AG04449 (cell line): ENCODE measurements at regions of chr9 and their contacts with region 1.

Region 1: DNA sequence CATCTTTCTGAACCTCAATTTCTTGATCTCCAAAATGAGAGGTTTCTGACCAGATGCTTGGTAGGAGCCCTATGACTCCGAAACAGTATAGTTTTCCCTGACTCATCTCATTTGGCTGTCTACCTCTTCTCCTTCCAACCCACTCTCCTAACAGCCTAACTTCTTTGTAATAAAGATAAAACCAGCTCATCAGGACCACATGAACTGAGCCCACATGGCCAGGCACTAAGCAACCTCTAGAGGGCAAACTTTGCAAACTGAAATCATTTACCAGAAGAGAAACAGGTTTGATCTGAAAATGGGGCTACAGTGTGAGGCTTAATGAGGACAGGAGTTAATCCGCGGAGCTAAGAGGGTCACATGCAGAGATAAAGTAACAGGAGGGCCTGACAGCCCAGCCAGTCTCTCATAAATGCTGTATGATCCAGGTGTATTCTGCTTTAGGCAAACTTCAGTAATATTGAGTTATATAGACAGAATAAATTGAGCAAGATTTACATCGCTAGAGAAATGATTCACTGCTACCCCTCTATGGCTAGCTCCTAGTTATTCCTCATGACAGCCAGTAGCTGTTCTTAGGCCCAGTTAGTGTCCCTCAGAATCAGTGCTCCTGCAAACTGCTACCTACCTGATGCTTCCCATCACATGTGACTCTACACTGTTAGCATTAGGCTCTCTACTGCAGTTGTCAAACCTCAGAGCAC is 64.6 kb downstream of the ABCA1 start:
- DNase-seq: no peak
- H3K4me3 ChIP-seq: no peak overlapping the region
- CTCF ChIP-seq: peak; percentile 75

Region 2: DNA sequence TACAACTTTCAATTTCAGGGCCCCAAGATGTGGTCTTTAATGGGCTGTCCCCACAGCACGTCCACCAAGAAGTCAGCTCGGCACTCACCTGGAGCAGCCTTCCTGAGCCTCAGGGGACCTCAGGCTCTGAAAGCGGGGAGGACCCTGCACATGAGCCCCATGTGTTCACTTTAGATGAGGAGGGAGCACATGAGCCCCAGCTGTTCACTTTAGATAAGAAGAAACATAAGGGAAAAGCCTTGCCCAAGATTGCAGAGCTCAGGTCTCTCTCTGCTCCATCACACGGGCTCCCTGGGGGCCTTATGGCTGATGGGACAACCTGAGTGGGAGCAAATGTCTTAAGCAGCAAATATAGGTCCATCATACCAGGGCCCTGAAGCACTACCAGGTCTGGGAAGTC is 43.0 kb before region 1 on chr9:
- CTCF ChIA-PET with region 1: no interaction called
- POLR2A ChIA-PET with region 1: no interaction called
- DNase-seq: no peak
- H3K4me3 ChIP-seq: no peak overlapping the region
- CTCF ChIP-seq: no peak

Region 3: DNA sequence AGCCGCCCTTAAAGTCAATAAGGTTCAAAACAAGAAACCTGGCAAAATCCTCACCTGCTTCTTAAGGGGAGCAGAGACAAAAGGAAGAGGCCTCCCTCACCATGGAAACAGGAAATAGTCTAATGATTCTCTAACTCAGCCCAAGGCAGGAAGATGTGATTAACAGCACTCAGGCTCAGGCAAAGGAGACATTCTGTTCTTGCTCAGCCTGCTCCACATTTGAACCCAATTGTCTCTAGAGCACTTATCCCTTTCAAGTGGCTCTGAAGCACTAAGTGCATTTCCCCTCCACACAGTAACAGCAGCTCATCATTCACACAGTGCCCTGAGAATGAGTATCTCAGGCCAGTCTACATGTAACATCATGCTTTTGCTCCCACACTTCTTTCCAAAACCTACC is 27.1 kb before region 1 on chr9:
- CTCF ChIA-PET with region 1: interaction called, 15 read pairs
- POLR2A ChIA-PET with region 1: no interaction called
- DNase-seq: no peak
- H3K4me3 ChIP-seq: no peak overlapping the region
- CTCF ChIP-seq: no peak

Region 4: DNA sequence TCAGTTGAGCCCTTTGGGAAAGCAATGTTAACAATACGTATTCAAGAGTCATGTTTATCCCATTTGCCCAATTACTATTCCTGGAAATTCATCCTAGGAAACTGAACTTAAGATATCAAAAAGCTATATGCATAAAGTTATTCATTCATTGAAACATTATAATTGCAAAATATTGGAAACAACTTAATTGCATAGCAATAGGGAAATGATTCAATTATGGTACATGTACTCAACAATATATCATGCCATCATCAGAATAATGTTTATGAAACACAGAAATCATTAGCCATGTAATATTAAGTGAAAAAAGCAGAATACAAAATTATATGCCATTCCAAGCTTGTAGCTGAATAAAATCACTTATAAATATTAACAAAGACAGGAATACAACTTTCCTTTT is 29.4 kb after region 1 on chr9:
- CTCF ChIA-PET with region 1: interaction called, 21 read pairs
- POLR2A ChIA-PET with region 1: no interaction called
- DNase-seq: no peak
- H3K4me3 ChIP-seq: no peak overlapping the region
- CTCF ChIP-seq: no peak

Region 5: GRCh38 chr9:104927912-104928740 is 64.8 kb after region 1 on chr9 and contains the start of gene ABCA1:
- CTCF ChIA-PET with region 1: interaction called, 27 read pairs
- POLR2A ChIA-PET with region 1: interaction called, 5 read pairs
- DNase-seq: no peak
- H3K4me3 ChIP-seq: peak within 1 kb of the TSS; percentile 73
- CTCF ChIP-seq: no peak

Region 6: DNA sequence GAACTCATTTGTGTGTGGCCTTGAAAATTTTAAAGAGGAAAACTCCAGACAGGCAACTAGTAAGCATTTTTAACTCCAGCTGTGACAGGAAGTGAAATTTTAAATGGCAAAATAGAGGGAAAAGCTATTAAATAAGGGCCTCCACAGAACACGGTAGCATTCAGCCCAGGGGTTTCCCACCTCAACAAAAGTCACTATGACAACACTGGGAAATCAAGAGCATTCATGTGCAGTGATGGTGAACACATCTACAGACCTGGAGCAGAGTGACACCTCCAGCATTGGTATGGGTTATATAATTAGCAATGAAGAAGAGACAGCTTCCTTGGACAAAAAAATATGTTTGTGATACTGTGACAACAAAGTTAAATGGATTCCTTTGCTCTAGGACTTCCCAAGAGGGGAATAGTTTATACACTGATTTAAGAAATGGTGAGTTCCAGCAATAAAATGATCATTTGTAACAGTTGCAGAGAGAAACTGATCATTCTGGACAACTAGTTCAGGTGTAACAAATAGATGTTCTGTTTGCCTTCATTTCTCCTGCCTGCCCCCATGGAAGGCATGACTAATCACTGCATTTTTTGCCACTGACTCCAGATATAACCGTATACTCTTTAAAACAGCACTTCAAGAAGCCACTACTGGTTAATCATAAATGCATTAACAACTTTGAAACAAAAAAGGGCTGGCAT is 287.8 kb after region 1 on chr9:
- CTCF ChIA-PET with region 1: interaction called, 32 read pairs
- POLR2A ChIA-PET with region 1: no interaction called
- DNase-seq: no peak
- H3K4me3 ChIP-seq: no peak overlapping the region
- CTCF ChIP-seq: no peak

Region 7: GRCh38 chr9:105414947-105415661 is 551.8 kb after region 1 on chr9:
- CTCF ChIA-PET with region 1: interaction called, 19 read pairs
- POLR2A ChIA-PET with region 1: no interaction called
- DNase-seq: no peak
- H3K4me3 ChIP-seq: no peak overlapping the region
- CTCF ChIP-seq: peak; percentile 64